PC-3 (cell line): ENCODE measurements at regions of chrX and their contacts with region 1.

Region 1: GRCh38 chrX:111123125-111123524 is 27.1 kb downstream of the PAK3 start:
- DNase-seq: no peak
- ATAC-seq: no peak
- H3K4me3 ChIP-seq: no peak overlapping the region
- H3K27ac ChIP-seq: no peak overlapping the region
- H3K4me1 ChIP-seq: no peaks in the 10 kb centered on the region
- H3K27me3 ChIP-seq: no peaks in the 10 kb centered on the region
- CTCF ChIP-seq: no peak

Region 2: DNA sequence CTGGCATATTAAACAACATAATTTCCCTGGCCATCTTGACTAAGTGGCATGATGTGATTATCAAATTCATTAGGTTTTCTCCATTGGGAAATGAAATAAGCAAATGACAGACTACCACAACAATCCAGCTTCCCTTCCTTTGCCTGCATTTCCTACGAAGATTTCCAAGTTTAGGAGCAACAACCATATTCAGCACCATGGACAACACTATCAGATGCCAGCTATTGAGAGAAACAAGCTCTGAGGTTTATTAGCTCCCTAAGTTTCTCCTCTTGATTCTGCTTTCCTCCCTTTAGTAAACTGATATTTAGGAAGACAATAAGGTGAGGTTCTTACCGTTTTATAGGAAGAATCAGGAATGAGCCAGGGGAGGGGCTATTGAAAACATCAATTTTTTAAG is 252.6 kb after region 1 on chrX:
- CTCF ChIA-PET with region 1: interaction called, 17 read pairs
- POLR2A ChIA-PET with region 1: no interaction called
- intact Hi-C with region 1: no loop called
- DNase-seq: no peak
- ATAC-seq: no peak
- H3K4me3 ChIP-seq: no peak overlapping the region
- H3K27ac ChIP-seq: no peak overlapping the region
- H3K4me1 ChIP-seq: no peaks in the 10 kb centered on the region
- H3K27me3 ChIP-seq: no peaks in the 10 kb centered on the region
- CTCF ChIP-seq: no peak